Heart right ventricle (tissue), 16 donors: ENCODE measurements at regions of chr4 and their contacts with region 1.

Region 1: DNA sequence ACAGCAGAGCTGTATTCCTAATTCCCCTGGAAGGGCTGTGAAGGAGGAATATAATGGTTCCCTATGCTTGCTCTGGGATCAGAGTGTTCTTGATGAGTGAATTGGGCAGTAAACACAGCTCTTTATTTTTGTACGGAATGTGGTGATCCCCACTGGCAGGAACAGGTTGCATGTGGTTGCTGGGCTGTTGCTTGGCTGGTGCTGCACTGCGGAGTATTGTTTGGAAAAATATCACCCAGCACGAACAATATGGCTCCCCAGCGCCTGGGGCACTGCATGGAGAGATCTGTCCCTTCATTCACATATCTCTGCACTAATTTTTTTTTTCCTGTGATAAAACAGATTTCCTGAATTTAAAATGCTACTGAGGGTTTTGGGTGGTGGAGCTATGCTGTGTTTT is 119.7 kb downstream of the MGST2 start:
- DNase-seq: no peak
- ATAC-seq: no peak
- H3K4me3 ChIP-seq: no peak overlapping the region
- H3K27ac ChIP-seq: no peak overlapping the region
- H3K4me1 ChIP-seq: peaks cover 0 to 8% (median 0%) of the 10 kb centered on the region in 9 donors
- H3K27me3 ChIP-seq: no peaks in the 10 kb centered on the region
- CTCF ChIP-seq: no peak

Region 2: GRCh38 chr4:139774759-139775487 is 10.4 kb before region 1 on chr4:
- intact Hi-C with region 1: loop called in 1 of 10 experiments (anchors 1 kb)
- DNase-seq: no peak
- ATAC-seq: no peak
- H3K4me3 ChIP-seq: no peak overlapping the region
- H3K27ac ChIP-seq: no peak overlapping the region
- H3K4me1 ChIP-seq: peaks cover 4 to 49% (median 22%) of the 10 kb centered on the region in 9 donors
- H3K27me3 ChIP-seq: no peaks in the 10 kb centered on the region
- CTCF ChIP-seq: no peak